Activated CD8-positive, alpha-beta memory T cell treated with anti-CD3 and anti-CD28 coated beads, Interleukin-2, amount 10 ng/mL, durations not matched to agents 7 days and 5 days (primary cell): ENCODE measurements at regions of chr9 and their contacts with region 1.

Region 1: GRCh38 chr9:133023117-133023890 is 7.5 kb upstream of the GTF3C5 start:
- DNase-seq: peak; percentile 83
- ATAC-seq: peak; percentile 68
- H3K4me3 Mint-ChIP-seq: no peak overlapping the region
- H3K27ac Mint-ChIP-seq: peak overlapping the region; percentile 54
- H3K4me1 Mint-ChIP-seq: peaks cover 22% of the 10 kb centered on the region
- H3K27me3 Mint-ChIP-seq: peaks cover 5% of the 10 kb centered on the region

Region 2: DNA sequence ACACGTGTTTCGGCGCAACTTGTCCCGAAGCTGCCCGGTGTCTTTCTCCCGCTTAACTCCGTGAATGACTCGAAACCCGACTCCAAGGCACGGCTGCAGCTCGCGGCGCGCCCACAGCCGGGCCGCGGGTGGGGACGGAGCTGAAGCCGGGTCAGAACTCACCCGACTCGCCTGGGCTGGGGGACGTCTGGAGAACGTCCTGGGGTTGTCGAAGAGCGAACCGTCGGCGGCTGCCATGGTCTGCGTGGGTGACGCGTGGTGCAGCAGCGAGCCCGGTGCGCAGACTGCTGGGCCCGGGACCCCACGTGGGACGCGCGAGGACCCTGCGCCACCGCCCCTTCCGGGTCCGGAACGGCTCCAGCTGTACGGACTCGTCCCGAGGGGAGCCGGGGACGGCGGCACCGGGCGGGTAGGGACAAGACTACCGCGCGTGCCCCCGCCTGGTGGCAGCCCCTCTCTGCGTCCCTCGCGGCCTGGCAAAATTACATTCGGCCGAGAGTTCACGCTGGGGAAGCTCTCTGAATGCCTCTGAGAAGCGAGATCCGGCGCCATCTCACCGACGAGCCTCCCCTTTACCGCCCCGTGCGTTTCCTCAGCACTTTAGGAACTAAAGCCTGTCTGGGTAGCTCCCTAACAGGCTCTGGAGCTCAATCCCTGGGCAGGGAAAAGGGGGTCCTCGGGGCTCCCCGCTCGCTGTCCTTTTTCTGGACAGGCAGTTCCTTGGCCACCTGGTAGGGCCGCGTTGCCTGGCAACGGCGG is 353.4 kb before region 1 on chr9 and contains the start of gene DDX31:
- CTCF ChIA-PET with region 1: no interaction called
- DNase-seq: peak; percentile 88
- ATAC-seq: peak; percentile 92
- H3K4me3 Mint-ChIP-seq: peak within 1 kb of the TSS; percentile 86
- H3K27ac Mint-ChIP-seq: peak within 1 kb of the TSS; percentile 87
- H3K4me1 Mint-ChIP-seq: peaks cover 41% of the 10 kb centered on the region
- H3K27me3 Mint-ChIP-seq: no peaks in the 10 kb centered on the region
- total RNA-seq, gene DDX31: 14.6 to 19.6 TPM

Region 3: GRCh38 chr9:132744881-132745755 is 278.2 kb before region 1 on chr9:
- CTCF ChIA-PET with region 1: no interaction called
- DNase-seq: no peak
- ATAC-seq: no peak
- H3K4me3 Mint-ChIP-seq: no peak overlapping the region
- H3K27ac Mint-ChIP-seq: no peak overlapping the region
- H3K4me1 Mint-ChIP-seq: no peaks in the 10 kb centered on the region
- H3K27me3 Mint-ChIP-seq: peaks cover 52% of the 10 kb centered on the region

Region 4: DNA sequence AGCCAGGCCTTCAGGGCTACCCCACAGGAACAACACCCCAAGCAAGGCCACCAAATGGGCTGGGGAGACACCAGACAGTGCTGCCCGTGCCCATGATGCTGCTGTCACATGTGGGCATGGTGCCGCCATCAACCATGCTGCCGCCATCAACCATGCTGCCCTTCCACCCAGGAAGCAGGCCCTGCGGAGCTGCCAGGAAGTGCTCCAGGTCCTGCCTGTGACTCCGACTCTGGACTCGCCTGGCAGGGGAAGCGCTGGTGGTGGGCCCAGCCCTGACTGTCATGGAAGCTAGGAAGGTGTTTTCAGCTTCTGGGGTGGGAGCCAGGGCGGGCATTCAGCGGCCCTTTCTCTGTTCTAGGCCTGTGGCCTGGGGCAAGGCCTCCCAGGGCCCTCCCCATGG is 154.0 kb before region 1 on chr9:
- CTCF ChIA-PET with region 1: no interaction called
- DNase-seq: no peak
- ATAC-seq: no peak
- H3K4me3 Mint-ChIP-seq: no peak overlapping the region
- H3K27ac Mint-ChIP-seq: no peak overlapping the region
- H3K4me1 Mint-ChIP-seq: peaks cover 12% of the 10 kb centered on the region
- H3K27me3 Mint-ChIP-seq: peaks cover 49% of the 10 kb centered on the region

Region 5: DNA sequence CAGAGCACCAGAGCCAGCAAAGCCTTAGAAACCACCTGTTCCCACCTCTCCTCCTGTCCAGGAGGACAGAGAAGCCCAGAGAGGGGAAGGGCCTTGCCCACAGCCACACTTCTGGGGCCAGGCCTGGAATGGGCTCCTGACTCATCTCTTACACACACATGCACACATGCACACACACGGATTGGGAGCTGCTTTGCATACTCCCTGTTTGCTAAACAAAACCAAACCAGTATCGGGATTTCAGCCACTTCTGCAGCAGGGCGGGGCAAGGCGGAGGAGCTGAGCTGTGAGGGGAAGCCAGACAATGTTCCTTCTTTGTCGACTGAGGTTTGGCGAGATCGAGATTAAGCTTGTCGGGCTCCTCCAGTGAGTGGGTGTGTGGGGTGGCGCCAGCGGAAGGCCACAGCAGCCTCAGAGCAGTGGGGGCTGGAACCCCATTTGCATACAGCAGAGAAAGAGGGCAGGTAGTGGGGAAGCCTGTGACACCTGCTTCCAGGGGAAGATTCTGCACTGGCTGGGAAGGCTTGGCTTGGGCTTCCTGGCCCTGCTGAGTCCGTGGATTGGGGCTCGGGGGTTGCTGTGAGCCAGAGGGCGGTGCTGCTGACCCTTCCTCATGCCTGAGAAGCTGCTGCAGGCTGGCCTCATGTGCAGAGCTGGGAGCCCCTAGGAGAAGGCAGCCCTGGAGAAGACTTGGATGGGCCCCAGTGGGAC is 28.7 kb before region 1 on chr9:
- CTCF ChIA-PET with region 1: interaction called, 18 read pairs
- DNase-seq: peak; percentile 57
- ATAC-seq: peak; percentile 35
- H3K4me3 Mint-ChIP-seq: no peak overlapping the region
- H3K27ac Mint-ChIP-seq: no peak overlapping the region
- H3K4me1 Mint-ChIP-seq: peaks cover 25% of the 10 kb centered on the region
- H3K27me3 Mint-ChIP-seq: peaks cover 57% of the 10 kb centered on the region

Region 6: GRCh38 chr9:133004091-133004998 is 19.0 kb before region 1 on chr9:
- CTCF ChIA-PET with region 1: interaction called, 15 read pairs
- DNase-seq: no peak
- ATAC-seq: no peak
- H3K4me3 Mint-ChIP-seq: no peak overlapping the region
- H3K27ac Mint-ChIP-seq: no peak overlapping the region
- H3K4me1 Mint-ChIP-seq: peaks cover 16% of the 10 kb centered on the region
- H3K27me3 Mint-ChIP-seq: peaks cover 47% of the 10 kb centered on the region

Region 7: GRCh38 chr9:133060417-133060841 is 37.1 kb after region 1 on chr9:
- CTCF ChIA-PET with region 1: interaction called, 12 read pairs
- DNase-seq: no peak
- ATAC-seq: peak; percentile 37
- H3K4me3 Mint-ChIP-seq: no peak overlapping the region
- H3K27ac Mint-ChIP-seq: peak overlapping the region; percentile 81
- H3K4me1 Mint-ChIP-seq: peaks cover 50% of the 10 kb centered on the region
- H3K27me3 Mint-ChIP-seq: no peaks in the 10 kb centered on the region

Region 8: DNA sequence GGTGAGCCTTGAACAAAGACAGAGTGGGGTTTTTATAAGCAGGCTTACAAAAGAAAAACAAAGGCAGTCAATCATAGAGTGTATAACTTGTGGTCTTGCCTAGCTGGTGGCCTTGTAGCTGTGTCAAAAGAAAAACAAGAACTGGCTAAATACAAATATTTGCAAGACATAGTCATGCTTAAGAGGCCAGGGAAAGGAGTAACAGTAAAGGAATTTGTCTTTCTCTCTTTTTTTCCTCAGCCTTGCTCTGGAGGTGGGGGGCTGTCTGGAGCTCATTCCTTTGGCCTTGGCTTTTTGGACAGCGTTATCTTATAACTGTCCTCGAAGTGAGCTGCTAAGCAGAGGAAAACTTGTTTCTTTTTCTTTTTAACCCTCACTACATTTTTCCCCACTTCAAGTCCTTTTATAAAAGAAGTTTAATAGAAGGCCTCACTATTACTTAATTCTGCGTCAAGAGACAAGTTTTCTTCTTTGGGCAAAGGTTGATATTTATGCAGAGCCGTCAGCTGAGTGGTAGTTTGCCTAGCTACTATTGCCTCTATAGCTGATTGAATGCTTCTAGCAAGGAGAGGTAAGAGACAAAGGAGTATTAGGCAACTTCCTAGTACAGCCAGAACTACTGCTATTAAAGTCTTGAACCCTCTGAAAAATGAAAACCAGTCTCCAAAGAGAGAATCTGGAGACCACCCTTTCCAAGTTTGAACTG is 52.8 kb after region 1 on chr9:
- CTCF ChIA-PET with region 1: interaction called, 19 read pairs
- DNase-seq: no peak
- ATAC-seq: no peak
- H3K4me3 Mint-ChIP-seq: no peak overlapping the region
- H3K27ac Mint-ChIP-seq: no peak overlapping the region
- H3K4me1 Mint-ChIP-seq: no peaks in the 10 kb centered on the region
- H3K27me3 Mint-ChIP-seq: peaks cover 26% of the 10 kb centered on the region

Region 9: DNA sequence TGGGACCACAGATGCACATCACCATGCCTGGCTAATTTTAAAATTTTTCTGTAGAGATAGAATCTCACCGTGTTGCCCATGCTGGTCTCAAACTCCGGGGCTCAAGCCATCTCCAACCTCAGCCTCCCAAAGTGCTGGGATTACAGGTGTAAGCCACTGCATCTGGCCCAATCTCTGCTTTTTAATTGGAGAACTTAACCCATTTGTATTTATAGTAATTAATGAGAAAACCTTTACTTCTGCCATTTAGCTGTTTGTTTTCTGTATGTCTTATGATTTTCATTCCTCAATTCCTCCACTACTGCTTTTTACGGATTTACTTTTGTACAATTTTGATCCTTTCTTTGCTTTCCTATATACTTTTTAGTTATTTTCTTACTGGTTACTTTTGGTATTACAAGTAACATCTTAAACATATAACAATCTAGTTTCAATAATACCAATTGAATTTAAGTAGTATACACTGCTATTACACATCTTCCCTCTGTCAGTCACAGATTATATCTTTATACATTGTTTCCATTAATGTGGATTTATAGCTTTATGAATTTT is 71.6 kb after region 1 on chr9:
- CTCF ChIA-PET with region 1: interaction called, 10 read pairs
- DNase-seq: no peak
- ATAC-seq: no peak
- H3K4me3 Mint-ChIP-seq: no peak overlapping the region
- H3K27ac Mint-ChIP-seq: no peak overlapping the region
- H3K4me1 Mint-ChIP-seq: peaks cover 6% of the 10 kb centered on the region
- H3K27me3 Mint-ChIP-seq: no peaks in the 10 kb centered on the region

Region 10: GRCh38 chr9:133149126-133150107 is 126.1 kb after region 1 on chr9:
- CTCF ChIA-PET with region 1: interaction called, 97 read pairs
- DNase-seq: peak; percentile 88
- ATAC-seq: peak; percentile 62
- H3K4me3 Mint-ChIP-seq: peak overlapping the region; percentile 59
- H3K27ac Mint-ChIP-seq: peak overlapping the region; percentile 73
- H3K4me1 Mint-ChIP-seq: peaks cover 36% of the 10 kb centered on the region
- H3K27me3 Mint-ChIP-seq: no peaks in the 10 kb centered on the region

Region 11: GRCh38 chr9:133238272-133238850 is 215.1 kb after region 1 on chr9:
- CTCF ChIA-PET with region 1: no interaction called
- DNase-seq: peak; percentile 51
- ATAC-seq: peak; percentile 71
- H3K4me3 Mint-ChIP-seq: no peak overlapping the region
- H3K27ac Mint-ChIP-seq: no peak overlapping the region
- H3K4me1 Mint-ChIP-seq: peaks cover 6% of the 10 kb centered on the region
- H3K27me3 Mint-ChIP-seq: peaks cover 23% of the 10 kb centered on the region